AG04450 (cell line): ENCODE measurements at regions of chr20 and their contacts with region 1.

Region 1: GRCh38 chr20:8853805-8854338 is 215.0 kb upstream of the PLCB4 start:
- DNase-seq: peak; percentile 64
- H3K4me3 ChIP-seq: peak overlapping the region; percentile 36
- H3K27ac ChIP-seq: peak overlapping the region; percentile 75
- H3K27me3 ChIP-seq: no peaks in the 10 kb centered on the region
- CTCF ChIP-seq: peak; percentile 91

Region 2: DNA sequence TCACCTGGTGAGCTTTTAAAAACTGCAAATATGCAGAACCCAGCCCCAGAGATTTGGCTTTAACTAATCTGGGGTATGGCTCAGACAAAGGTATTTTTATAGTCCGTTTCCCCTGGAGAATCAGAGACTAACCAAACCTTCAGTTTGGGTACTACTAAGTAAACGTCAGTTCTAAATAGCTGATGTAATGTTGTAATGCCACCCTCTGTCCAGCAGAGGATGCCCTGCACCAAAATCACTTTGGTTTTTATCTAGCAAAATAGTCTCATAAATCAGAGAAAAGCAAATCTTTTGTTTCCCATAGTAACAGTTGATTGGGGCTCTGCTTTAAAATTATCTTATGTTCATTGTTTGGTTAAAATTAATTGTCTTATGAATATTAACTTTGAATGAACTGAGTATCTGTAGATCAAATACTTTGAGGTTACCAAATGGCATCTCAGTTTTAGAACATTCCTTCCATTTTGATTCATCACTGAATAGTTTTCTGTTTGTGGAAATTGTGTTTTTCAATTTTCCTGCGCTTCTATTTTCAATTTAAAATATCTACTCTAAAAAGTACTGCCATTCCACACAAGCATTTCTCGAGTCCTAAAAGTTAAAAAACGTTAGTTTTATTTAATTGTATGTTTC is 63.3 kb before region 1 on chr20:
- CTCF ChIA-PET with region 1: interaction called, 12 read pairs
- POLR2A ChIA-PET with region 1: no interaction called
- DNase-seq: peak; percentile 15
- H3K4me3 ChIP-seq: no peak overlapping the region
- H3K27ac ChIP-seq: no peak overlapping the region
- H3K27me3 ChIP-seq: no peaks in the 10 kb centered on the region
- CTCF ChIP-seq: peak; percentile 100

Region 3: GRCh38 chr20:8837396-8837795 is 16.5 kb before region 1 on chr20:
- CTCF ChIA-PET with region 1: interaction called, 37 read pairs
- POLR2A ChIA-PET with region 1: no interaction called
- DNase-seq: peak; percentile 60
- H3K4me3 ChIP-seq: no peak overlapping the region
- H3K27ac ChIP-seq: peak overlapping the region; percentile 75
- H3K27me3 ChIP-seq: no peaks in the 10 kb centered on the region
- CTCF ChIP-seq: no peak

Region 4: GRCh38 chr20:9068851-9069663 is 215.2 kb after region 1 on chr20 and contains the start of gene PLCB4:
- CTCF ChIA-PET with region 1: interaction called, 10 read pairs
- POLR2A ChIA-PET with region 1: interaction called, 5 read pairs
- DNase-seq: no peak
- H3K4me3 ChIP-seq: peak within 1 kb of the TSS; percentile 89
- H3K27ac ChIP-seq: peak within 1 kb of the TSS; percentile 25
- H3K27me3 ChIP-seq: no peaks in the 10 kb centered on the region
- CTCF ChIP-seq: no peak
- polyA plus RNA-seq, gene PLCB4: 13.0 and 18.6 TPM in 2 replicates

Region 5: GRCh38 chr20:9306517-9306916 is 452.6 kb after region 1 on chr20:
- CTCF ChIA-PET with region 1: interaction called, 12 read pairs
- POLR2A ChIA-PET with region 1: no interaction called
- DNase-seq: peak; percentile 79
- H3K4me3 ChIP-seq: no peak overlapping the region
- H3K27ac ChIP-seq: no peak overlapping the region
- H3K27me3 ChIP-seq: no peaks in the 10 kb centered on the region
- CTCF ChIP-seq: no peak

Region 6: DNA sequence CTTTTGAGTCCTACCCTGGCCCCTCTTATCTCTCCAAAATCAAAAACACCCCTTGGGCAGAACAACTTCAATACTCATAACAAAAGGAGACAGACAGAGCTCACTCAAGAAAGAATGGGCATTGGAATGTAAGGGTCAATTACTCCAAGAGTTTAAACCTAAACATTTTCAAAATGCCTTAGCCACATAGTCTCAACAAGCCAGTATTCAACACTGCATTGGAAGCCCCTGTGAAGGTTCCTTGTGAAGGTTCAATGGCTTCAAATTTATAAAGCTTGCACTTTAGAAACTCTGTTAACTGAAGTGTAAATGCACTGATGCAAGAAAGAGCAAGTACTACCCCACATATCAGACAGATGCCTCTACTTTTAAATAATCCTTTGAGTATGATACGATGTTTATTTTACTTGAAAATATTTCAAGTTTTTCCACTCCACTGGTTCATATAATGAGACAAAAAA is 521.4 kb after region 1 on chr20:
- CTCF ChIA-PET with region 1: interaction called, 20 read pairs
- POLR2A ChIA-PET with region 1: interaction called, 3 read pairs
- DNase-seq: peak; percentile 27
- H3K4me3 ChIP-seq: no peak overlapping the region
- H3K27ac ChIP-seq: peak overlapping the region; percentile 74
- H3K27me3 ChIP-seq: no peaks in the 10 kb centered on the region
- CTCF ChIP-seq: no peak